ENCODE measurements at regions of chr20 and their contacts with region 1.

Region 1: DNA sequence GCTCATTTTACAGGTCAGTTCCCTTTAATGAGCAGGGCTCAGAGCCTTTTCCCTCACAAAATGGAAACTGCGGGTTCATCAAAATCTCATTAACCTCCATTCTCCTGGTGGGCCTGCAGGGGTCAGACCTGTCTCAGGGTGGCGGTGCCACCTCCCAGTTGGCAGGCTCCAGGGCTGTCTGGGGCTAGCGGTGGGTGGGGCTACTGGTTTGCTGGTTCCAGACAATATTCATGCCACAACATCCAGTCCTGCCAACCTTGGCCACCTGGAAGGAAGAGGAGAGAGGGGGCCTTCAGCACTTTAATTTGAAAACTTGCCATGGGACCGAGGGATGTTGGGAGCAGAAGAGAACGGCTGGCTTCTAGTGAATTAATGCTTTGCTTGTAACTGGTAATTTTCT is 41.9 kb upstream of the CTNNBL1 start:
- DNase-seq: peak in 1 of 2 experiments; percentile 59
- H3K4me3 ChIP-seq: no peak overlapping the region
- H3K4me3 Mint-ChIP-seq: no peak overlapping the region
- H3K27ac Mint-ChIP-seq: no peak overlapping the region
- H3K4me1 ChIP-seq: peaks cover 7% of the 10 kb centered on the region
- H3K4me1 Mint-ChIP-seq: peaks cover 17% of the 10 kb centered on the region
- H3K27me3 ChIP-seq: no peaks in the 10 kb centered on the region
- H3K27me3 Mint-ChIP-seq: peaks cover 3% of the 10 kb centered on the region
- CTCF ChIP-seq: peak; percentile 63 to 73

Region 2: GRCh38 chr20:37673444-37673843 is 21.5 kb after region 1 on chr20:
- CTCF ChIA-PET with region 1: no interaction called
- POLR2A ChIA-PET with region 1: no interaction called
- intact Hi-C with region 1: loop called (anchors 1 kb)
- DNase-seq: peak; percentile 80 to 90
- H3K4me3 ChIP-seq: no peak overlapping the region
- H3K4me3 Mint-ChIP-seq: peak overlapping the region; percentile 4
- H3K27ac Mint-ChIP-seq: peak overlapping the region; percentile 20
- H3K4me1 ChIP-seq: peaks cover 37% of the 10 kb centered on the region
- H3K4me1 Mint-ChIP-seq: peaks cover 40% of the 10 kb centered on the region
- H3K27me3 ChIP-seq: no peaks in the 10 kb centered on the region
- H3K27me3 Mint-ChIP-seq: no peaks in the 10 kb centered on the region
- CTCF ChIP-seq: no peak

Measured in Caco-2 (cell line).